Natural killer cell (primary cell): ENCODE measurements at regions of chr9 and their contacts with region 1.

Region 1: DNA sequence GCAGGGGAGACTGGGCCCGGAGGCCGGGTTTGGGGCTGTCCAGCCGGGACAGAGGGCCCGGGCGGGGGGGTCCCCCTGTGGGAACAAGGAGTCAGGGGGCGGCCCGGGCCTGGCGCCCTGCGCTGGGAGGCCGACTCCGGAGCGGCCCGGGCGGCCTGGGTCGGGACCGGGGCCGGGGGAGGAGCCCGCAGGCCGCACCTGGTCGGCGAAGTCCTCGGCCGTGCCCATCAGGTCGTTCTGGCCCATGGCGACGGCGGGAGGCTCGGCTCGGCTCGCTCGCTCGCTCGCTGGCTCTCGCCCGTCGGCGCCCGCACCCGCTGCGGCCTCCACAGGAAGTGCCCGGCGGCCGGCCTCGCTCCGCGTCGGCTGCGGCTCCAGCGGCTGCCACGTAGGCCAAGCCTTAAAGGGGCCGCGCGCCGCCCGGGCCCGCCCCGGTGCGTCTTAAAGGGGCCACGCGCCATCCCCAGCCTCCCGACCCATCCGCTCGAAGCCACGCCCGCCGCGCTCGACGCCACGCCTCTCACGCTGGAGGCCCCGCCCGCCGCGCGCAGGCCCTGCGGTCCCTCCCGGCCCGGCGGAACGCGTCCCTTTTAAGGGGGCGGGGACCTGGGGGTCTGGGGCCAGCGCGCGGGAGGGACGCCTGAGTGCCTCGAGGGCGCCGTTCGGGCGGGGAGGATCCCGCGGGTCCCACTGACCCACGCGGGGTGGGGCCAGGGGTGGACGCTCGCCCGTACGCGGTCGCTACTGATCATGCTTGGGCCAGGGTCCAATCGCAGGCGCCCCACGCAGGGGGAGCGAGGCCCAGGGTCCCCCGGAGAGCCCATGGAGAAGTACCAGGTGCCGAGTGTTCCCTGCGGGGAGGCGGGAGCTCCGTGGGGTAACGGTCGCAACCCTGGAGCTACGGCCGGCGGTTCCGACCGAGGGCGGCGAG is at the starts of genes STKLD1 and SURF4:
- DNase-seq: peak; percentile 95 to 96
- ATAC-seq: peak; percentile 84 to 95 (median 91)
- H3K4me3 ChIP-seq: peak within 1 kb of the TSS; percentile 72
- H3K4me3 Mint-ChIP-seq: peak within 1 kb of the TSS; percentile 96
- H3K27ac ChIP-seq: peak within 1 kb of the TSS; percentile 75
- H3K27ac Mint-ChIP-seq: peak within 1 kb of the TSS; percentile 95 to 96
- H3K4me1 ChIP-seq: peaks cover 47% of the 10 kb centered on the region
- H3K4me1 Mint-ChIP-seq: peaks cover 28 to 34% of the 10 kb centered on the region in 2 donors
- H3K27me3 ChIP-seq: no peaks in the 10 kb centered on the region
- H3K27me3 Mint-ChIP-seq: no peaks in the 10 kb centered on the region
- CTCF ChIP-seq: no peak
- total RNA-seq, gene STKLD1: 0.53 to 2.9 (median 1.1) TPM
- total RNA-seq, gene SURF4: 111 to 135 (median 114) TPM

Region 2: GRCh38 chr9:133335878-133336811 is 39.8 kb before region 1 on chr9 and contains the start of gene SURF6:
- intact Hi-C with region 1: loop called (anchors 2 kb)
- DNase-seq: peak; percentile 93 to 97
- ATAC-seq: peak; percentile 90 to 97 (median 92)
- H3K4me3 ChIP-seq: peak within 1 kb of the TSS; percentile 95
- H3K4me3 Mint-ChIP-seq: peak within 1 kb of the TSS; percentile 95
- H3K27ac ChIP-seq: peak within 1 kb of the TSS; percentile 77
- H3K27ac Mint-ChIP-seq: peak within 1 kb of the TSS; percentile 91 to 95
- H3K4me1 ChIP-seq: peaks cover 41% of the 10 kb centered on the region
- H3K4me1 Mint-ChIP-seq: peaks cover 39 to 53% of the 10 kb centered on the region in 2 donors
- H3K27me3 ChIP-seq: no peaks in the 10 kb centered on the region
- H3K27me3 Mint-ChIP-seq: no peaks in the 10 kb centered on the region
- CTCF ChIP-seq: no peak
- total RNA-seq, gene SURF6: 13.8 to 23.5 (median 21.3) TPM

Region 3: GRCh38 chr9:133347985-133348717 is 27.8 kb before region 1 on chr9 and contains the starts of genes MED22 and RPL7A:
- intact Hi-C with region 1: loop called (anchors 1 kb)
- DNase-seq: peak; percentile 87 to 97
- ATAC-seq: peak; percentile 90 to 96 (median 93)
- H3K4me3 ChIP-seq: peak within 1 kb of the TSS; percentile 76
- H3K4me3 Mint-ChIP-seq: peak within 1 kb of the TSS; percentile 100
- H3K27ac ChIP-seq: peak within 1 kb of the TSS; percentile 75
- H3K27ac Mint-ChIP-seq: peak within 1 kb of the TSS; percentile 94 to 95
- H3K4me1 ChIP-seq: peaks cover 35% of the 10 kb centered on the region
- H3K4me1 Mint-ChIP-seq: peaks cover 42 to 44% of the 10 kb centered on the region in 2 donors
- H3K27me3 ChIP-seq: no peaks in the 10 kb centered on the region
- H3K27me3 Mint-ChIP-seq: no peaks in the 10 kb centered on the region
- CTCF ChIP-seq: no peak
- total RNA-seq, gene MED22: 23.8 to 37.0 (median 28.1) TPM
- total RNA-seq, gene RPL7A: 1,409 to 1,616 (median 1,600) TPM

Region 4: DNA sequence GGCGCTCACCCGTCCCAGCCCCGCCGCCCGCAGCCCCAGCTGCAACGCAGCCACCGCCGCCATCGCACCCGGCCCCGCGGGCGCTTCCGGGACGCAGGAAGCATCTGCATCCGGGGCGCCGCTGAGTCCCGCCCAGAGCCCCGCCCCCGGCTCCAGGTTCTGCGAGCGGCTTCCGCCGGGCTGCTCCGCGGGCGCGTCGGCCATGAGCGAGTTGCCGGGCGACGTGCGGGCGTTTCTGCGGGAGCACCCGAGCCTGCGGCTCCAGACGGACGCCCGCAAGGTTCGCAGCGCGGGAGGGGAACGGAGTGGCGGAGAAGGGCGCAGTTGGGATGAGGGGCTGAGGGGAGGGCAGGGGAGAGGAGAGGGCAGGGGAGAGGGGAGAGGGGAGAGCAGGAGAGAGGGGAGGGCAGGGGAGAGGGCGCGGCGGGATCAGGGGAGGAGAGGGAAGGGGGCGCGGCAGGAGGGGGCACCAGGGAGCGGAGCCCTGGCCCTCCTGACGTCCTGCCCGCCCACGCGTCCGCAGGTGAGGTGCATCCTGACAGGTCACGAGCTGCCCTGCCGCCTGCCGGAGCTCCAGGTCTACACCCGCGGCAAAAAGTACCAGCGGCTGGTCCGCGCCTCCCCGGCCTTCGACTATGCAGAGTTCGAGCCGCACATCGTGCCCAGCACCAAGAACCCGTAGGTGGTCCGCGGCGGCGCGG is 19.4 kb before region 1 on chr9 and contains the starts of genes SURF1 and SURF2:
- intact Hi-C with region 1: loop called (anchors 2 kb)
- DNase-seq: peak; percentile 88 to 93
- ATAC-seq: peak; percentile 94 to 97 (median 95)
- H3K4me3 ChIP-seq: peak within 1 kb of the TSS; percentile 72
- H3K4me3 Mint-ChIP-seq: peak within 1 kb of the TSS; percentile 87
- H3K27ac ChIP-seq: peak within 1 kb of the TSS; percentile 50
- H3K27ac Mint-ChIP-seq: peak within 1 kb of the TSS; percentile 77 to 87
- H3K4me1 ChIP-seq: peaks cover 37% of the 10 kb centered on the region
- H3K4me1 Mint-ChIP-seq: peaks cover 22 to 37% of the 10 kb centered on the region in 2 donors
- H3K27me3 ChIP-seq: no peaks in the 10 kb centered on the region
- H3K27me3 Mint-ChIP-seq: no peaks in the 10 kb centered on the region
- CTCF ChIP-seq: no peak
- total RNA-seq, gene SURF1: 35.6 to 44.4 (median 37.2) TPM
- total RNA-seq, gene SURF2: 14.3 to 14.9 (median 14.7) TPM